ENCODE measurements at regions of chr17 and their contacts with region 1.

Region 1: DNA sequence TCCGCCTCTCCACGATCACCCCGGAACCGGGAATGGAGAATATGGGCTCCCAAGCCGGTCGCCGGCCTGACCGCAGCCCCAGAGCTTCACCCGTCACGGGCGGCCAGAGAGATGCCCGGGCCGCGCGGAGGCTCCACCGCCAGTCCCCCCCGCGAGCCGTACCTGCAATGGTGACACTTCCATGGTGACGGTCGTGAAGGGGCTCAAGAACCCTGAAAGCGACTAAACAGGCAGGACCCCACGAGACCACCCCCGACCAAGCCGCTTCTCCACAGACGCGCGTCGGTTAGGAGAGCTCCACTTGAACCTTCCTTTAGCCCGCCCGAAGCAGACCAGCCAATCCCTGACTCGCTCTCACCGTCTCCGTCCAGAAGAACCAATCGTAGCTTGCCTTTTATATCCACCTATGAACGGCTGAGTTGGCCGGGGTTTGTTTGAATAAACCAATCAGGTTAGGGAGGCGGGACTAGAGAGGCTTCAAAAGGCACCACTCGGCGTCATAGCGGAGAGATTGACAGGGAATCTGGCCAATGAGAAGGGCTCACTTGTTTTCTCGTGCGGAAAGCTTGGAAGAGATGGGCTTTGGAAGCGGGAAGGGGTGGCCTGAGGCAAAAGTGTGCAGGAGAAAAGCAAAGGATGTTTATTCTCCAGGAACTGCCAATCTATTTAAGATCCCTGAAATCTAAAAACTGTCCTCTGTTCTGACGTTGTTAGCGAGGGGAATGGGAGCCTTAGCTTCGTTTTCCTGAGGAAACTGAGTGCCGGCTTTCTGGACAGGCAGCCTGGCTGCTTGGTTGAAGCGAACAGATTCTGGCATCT is at the start of gene TOP2A:
- DNase-seq: peak; percentile 100
- H3K4me3 ChIP-seq: peak within 1 kb of the TSS; percentile 82
- H3K27ac ChIP-seq: peak within 1 kb of the TSS; percentile 31
- H3K27me3 ChIP-seq: no peaks in the 10 kb centered on the region
- CTCF ChIP-seq: no peak
- polyA plus RNA-seq, gene TOP2A: 28.2 and 53.5 TPM in 2 replicates

Region 2: DNA sequence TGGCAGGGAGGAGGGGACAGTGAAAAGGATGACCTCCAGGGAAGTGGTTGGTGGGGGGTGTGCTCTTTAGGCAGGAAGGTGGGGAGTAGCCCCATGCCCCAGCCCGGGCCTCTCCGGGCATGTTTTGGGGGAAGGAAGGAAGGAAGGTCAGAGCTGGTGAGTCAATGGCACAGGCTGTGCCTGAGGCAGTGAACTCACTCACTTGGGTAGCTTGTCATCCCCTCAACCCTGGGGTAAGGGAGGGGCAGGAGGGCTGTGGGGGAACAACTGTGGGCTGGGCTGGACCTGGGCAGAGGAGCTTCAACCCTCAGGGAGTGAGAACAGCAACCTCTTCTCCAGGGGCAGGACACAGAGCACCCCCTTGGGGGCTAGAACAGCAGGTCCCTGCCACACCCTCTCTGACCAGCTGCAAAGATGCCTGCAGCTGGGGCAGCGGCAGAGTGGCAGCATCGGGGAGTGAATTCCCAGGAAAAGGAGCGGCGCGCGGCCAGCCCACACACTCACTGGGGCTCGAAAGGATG is 396.3 kb before region 1 on chr17:
- CTCF ChIA-PET with region 1: interaction called, 12 read pairs
- POLR2A ChIA-PET with region 1: no interaction called
- DNase-seq: no peak
- H3K4me3 ChIP-seq: no peak overlapping the region
- H3K27ac ChIP-seq: peak overlapping the region; percentile 75
- H3K27me3 ChIP-seq: no peaks in the 10 kb centered on the region
- CTCF ChIP-seq: no peak

Region 3: GRCh38 chr17:40203131-40203530 is 214.7 kb before region 1 on chr17:
- CTCF ChIA-PET with region 1: no interaction called
- POLR2A ChIA-PET with region 1: no interaction called
- DNase-seq: no peak
- H3K4me3 ChIP-seq: no peak overlapping the region
- H3K27ac ChIP-seq: no peak overlapping the region
- H3K27me3 ChIP-seq: peaks cover 6% of the 10 kb centered on the region
- CTCF ChIP-seq: no peak

Region 4: GRCh38 chr17:40362696-40363110 is 55.1 kb before region 1 on chr17:
- CTCF ChIA-PET with region 1: interaction called, 44 read pairs
- POLR2A ChIA-PET with region 1: no interaction called
- DNase-seq: no peak
- H3K4me3 ChIP-seq: peak overlapping the region; percentile 59
- H3K27ac ChIP-seq: no peak overlapping the region
- H3K27me3 ChIP-seq: no peaks in the 10 kb centered on the region
- CTCF ChIP-seq: peak; percentile 70

Region 5: DNA sequence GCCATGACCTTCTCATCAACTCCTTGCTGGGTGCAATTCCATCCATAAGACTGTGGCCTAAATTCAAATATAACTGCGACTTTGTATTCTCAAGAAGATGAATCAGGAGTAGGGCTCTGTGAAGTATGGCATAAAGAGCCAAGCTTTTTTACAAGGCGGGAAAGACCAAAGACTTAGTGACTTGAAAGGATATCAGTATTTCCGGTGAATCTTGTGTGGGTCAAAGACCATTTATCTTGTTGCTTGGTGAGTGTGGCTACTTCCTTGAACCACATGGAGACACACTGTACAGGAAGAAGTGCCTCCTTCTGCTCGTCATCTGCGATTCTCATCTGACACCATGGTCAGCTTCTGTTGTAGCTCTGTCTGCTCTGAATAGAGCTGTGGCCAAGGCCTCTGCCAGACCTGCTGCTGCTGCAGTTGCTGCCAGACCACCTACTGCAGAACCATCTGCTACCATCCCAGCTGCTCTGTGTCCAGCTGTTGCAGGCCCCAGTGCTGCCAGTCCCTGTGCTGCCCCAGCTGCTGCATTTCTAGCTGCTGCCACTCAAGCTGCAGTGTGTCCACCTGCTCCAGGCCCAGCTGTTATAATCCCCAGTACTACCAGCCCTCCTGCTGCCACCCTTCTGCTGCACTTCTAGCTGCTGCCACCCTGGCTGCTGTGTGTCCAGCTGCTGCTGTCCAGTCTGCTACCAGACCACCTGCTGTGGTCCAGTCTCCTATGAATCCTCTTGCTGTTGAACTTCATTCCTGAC is 654.0 kb after region 1 on chr17:
- CTCF ChIA-PET with region 1: no interaction called
- POLR2A ChIA-PET with region 1: no interaction called
- DNase-seq: no peak
- H3K4me3 ChIP-seq: no peak overlapping the region
- H3K27ac ChIP-seq: no peak overlapping the region
- H3K27me3 ChIP-seq: no peaks in the 10 kb centered on the region
- CTCF ChIP-seq: no peak

Measured in AG04450 (cell line).